ENCODE measurements at regions of chr1 and their contacts with region 1.

Region 1: DNA sequence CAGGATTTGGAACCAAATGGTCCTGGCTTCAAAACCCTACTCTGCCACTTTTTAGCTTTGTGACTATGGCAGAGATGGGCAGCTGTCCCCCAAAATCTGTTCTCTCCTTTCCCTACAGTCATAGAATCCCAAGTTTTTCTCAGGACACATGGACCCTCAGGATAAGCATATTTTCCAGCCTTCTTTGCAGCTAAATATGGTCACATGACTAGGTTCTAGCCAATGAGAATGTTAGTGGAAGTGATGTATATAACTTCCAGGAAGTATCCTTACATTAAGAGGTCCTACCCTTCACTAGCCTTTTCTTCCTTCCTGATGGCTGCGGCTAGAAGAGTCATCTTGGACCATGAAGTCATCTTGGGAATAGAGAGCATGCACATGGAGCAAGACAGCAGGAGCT is 5.9 kb downstream of the IGSF3 start:
- DNase-seq: no peak
- H3K4me3 ChIP-seq: no peak overlapping the region
- H3K27ac ChIP-seq: no peak overlapping the region
- H3K4me1 ChIP-seq: peaks cover under 1% of the 10 kb centered on the region
- H3K27me3 ChIP-seq: peaks cover 24 to 27% of the 10 kb centered on the region in 2 experiments
- CTCF ChIP-seq: no peak
- POLR2A ChIP-seq: no peak

Region 2: GRCh38 chr1:116674011-116674531 is 12.4 kb after region 1 on chr1:
- CTCF ChIA-PET with region 1: interaction called, 19 read pairs
- POLR2A ChIA-PET with region 1: no interaction called
- dilution Hi-C with region 1: no loop called
- intact Hi-C with region 1: no loop called
- DNase-seq: no peak
- H3K4me3 ChIP-seq: no peak overlapping the region
- H3K27ac ChIP-seq: no peak overlapping the region
- H3K4me1 ChIP-seq: no peaks in the 10 kb centered on the region
- H3K27me3 ChIP-seq: peaks cover 0 to 7% of the 10 kb centered on the region in 2 experiments
- CTCF ChIP-seq: no peak
- POLR2A ChIP-seq: no peak

Region 3: GRCh38 chr1:116751146-116751545 is 89.5 kb after region 1 on chr1:
- CTCF ChIA-PET with region 1: no interaction called
- POLR2A ChIA-PET with region 1: no interaction called
- dilution Hi-C with region 1: no loop called
- intact Hi-C with region 1: no loop called
- DNase-seq: no peak
- H3K4me3 ChIP-seq: no peak overlapping the region
- H3K27ac ChIP-seq: no peak overlapping the region
- H3K4me1 ChIP-seq: no peaks in the 10 kb centered on the region
- H3K27me3 ChIP-seq: no peaks in the 10 kb centered on the region
- CTCF ChIP-seq: no peak
- POLR2A ChIP-seq: no peak